Aorta (tissue), 5 donors: ENCODE measurements at regions of chr3 and their contacts with region 1.

Region 1: GRCh38 chr3:45995236-45996192 is at the start of gene FYCO1:
- DNase-seq: peak; percentile 97 to 98
- ATAC-seq: peak; percentile 96
- H3K4me3 ChIP-seq: peak within 1 kb of the TSS; percentile 77 to 92
- H3K27ac ChIP-seq: peak within 1 kb of the TSS; percentile 80
- H3K4me1 ChIP-seq: peaks cover 0 to 9% of the 10 kb centered on the region in 2 donors
- H3K27me3 ChIP-seq: no peaks in the 10 kb centered on the region
- total RNA-seq, gene FYCO1: 75.5 to 91.8 TPM

Region 2: DNA sequence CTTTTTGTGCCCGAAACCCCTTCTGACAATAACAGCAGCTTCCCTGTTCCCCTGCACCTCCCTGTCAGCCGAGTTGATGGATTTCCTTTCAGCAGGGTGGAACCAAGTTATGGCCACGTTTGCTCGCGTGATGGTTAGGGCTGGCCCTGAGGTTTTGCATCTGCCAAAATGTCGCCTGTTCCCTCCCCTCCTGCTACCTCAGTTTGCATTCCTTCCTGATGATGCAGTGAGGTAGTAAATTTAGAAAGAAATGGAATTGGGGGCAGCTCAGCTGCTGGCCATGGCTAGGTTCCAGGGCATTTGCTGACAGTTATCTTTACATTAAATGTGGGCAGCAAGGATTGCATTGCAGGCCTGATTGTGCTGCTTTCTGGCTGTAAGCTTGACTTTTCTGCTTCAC is 387.7 kb before region 1 on chr3:
- intact Hi-C with region 1: loop called in 1 of 2 experiments (anchors 5 kb)
- DNase-seq: no peak
- ATAC-seq: peak; percentile 61
- H3K4me3 ChIP-seq: no peak overlapping the region
- H3K27ac ChIP-seq: peak overlapping the region; percentile 63 to 96
- H3K4me1 ChIP-seq: peaks cover 3 to 24% of the 10 kb centered on the region in 2 donors
- H3K27me3 ChIP-seq: no peaks in the 10 kb centered on the region

Region 3: GRCh38 chr3:45852828-45853227 is 142.7 kb before region 1 on chr3:
- intact Hi-C with region 1: no loop called
- DNase-seq: no peak
- ATAC-seq: no peak
- H3K4me3 ChIP-seq: no peak overlapping the region
- H3K27ac ChIP-seq: no peak overlapping the region
- H3K4me1 ChIP-seq: no peaks in the 10 kb centered on the region
- H3K27me3 ChIP-seq: peaks cover 0 to 2% of the 10 kb centered on the region in 2 donors

Region 4: DNA sequence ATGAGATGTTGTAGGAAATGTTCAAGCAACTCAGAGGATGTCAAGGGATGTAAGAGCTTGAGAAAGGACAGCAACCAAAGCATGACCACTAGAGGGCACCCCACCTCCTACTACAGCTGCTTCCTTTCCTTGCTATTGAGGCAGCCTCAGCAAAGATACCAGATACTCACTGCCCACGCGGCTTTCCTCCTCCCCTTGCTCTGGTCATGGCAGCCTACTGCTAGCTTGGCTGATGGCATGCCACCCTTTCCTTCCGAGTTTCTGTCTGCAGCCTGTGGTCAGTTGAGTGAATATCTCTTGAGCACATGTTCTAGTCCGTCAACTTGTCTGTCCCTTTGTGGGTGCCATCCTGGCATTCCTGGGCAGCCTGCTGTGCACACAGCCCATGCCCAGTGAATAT is 56.6 kb before region 1 on chr3:
- intact Hi-C with region 1: loop called in 1 of 2 experiments (anchors 2 kb)
- DNase-seq: peak; percentile 86 to 92
- ATAC-seq: peak; percentile 92
- H3K4me3 ChIP-seq: no peak overlapping the region
- H3K27ac ChIP-seq: peak overlapping the region in 1 of 2 donors; percentile 15
- H3K4me1 ChIP-seq: no peaks in the 10 kb centered on the region
- H3K27me3 ChIP-seq: no peaks in the 10 kb centered on the region

Region 5: GRCh38 chr3:45948311-45948781 is 47.2 kb before region 1 on chr3:
- intact Hi-C with region 1: loop called in 1 of 2 experiments (anchors 5 kb)
- DNase-seq: no peak
- ATAC-seq: no peak
- H3K4me3 ChIP-seq: no peak overlapping the region
- H3K27ac ChIP-seq: peak overlapping the region in 1 of 2 donors; percentile 26
- H3K4me1 ChIP-seq: peaks cover 0 to 3% of the 10 kb centered on the region in 2 donors
- H3K27me3 ChIP-seq: no peaks in the 10 kb centered on the region

Region 6: DNA sequence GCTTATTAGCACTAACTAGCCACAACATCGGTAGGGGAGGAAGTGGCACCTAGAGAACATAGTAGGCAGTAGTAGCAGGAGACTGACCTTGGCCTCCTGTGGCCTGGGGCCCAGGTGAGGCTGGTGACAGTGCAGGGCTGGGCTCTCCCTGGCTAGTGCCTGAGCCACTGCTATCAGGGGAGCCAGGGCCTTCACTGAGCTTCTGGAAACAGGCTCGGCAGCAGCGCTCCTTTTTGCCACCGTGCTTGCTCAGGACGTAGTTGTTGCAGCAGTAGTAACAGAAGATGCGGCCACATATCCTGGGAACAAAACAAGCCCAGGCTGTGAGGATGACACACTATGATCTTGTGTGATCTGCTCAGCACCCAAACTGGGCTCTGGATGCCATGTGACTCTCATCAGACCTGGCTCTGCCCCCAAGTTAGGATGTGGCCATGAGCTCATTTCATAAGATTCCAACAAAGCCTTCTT is 37.2 kb before region 1 on chr3:
- intact Hi-C with region 1: no loop called
- DNase-seq: peak in 1 of 2 donors; percentile 51
- ATAC-seq: no peak
- H3K4me3 ChIP-seq: no peak overlapping the region
- H3K27ac ChIP-seq: no peak overlapping the region
- H3K4me1 ChIP-seq: no peaks in the 10 kb centered on the region
- H3K27me3 ChIP-seq: no peaks in the 10 kb centered on the region